ENCODE measurements at regions of chr15 and their contacts with region 1.

Region 1: GRCh38 chr15:88003541-88004332 is 252.8 kb downstream of the NTRK3 start:
- DNase-seq: no peak
- H3K4me3 ChIP-seq: no peak overlapping the region
- H3K27ac ChIP-seq: no peak overlapping the region
- H3K4me1 ChIP-seq: no peaks in the 10 kb centered on the region
- H3K27me3 ChIP-seq: no peaks in the 10 kb centered on the region
- CTCF ChIP-seq: no peak
- EP300 ChIP-seq: no peak
- POLR2A ChIP-seq: no peak

Region 2: GRCh38 chr15:87952736-87953287 is 50.9 kb before region 1 on chr15:
- intact Hi-C with region 1: loop called in 1 of 4 experiments (anchors 2 kb)
- DNase-seq: no peak
- H3K4me3 ChIP-seq: no peak overlapping the region
- H3K27ac ChIP-seq: no peak overlapping the region
- H3K4me1 ChIP-seq: no peaks in the 10 kb centered on the region
- H3K27me3 ChIP-seq: no peaks in the 10 kb centered on the region
- CTCF ChIP-seq: no peak
- EP300 ChIP-seq: no peak
- POLR2A ChIP-seq: no peak

Region 3: GRCh38 chr15:87967953-87968352 is 35.8 kb before region 1 on chr15:
- intact Hi-C with region 1: no loop called
- DNase-seq: no peak
- H3K4me3 ChIP-seq: no peak overlapping the region
- H3K27ac ChIP-seq: no peak overlapping the region
- H3K4me1 ChIP-seq: no peaks in the 10 kb centered on the region
- H3K27me3 ChIP-seq: no peaks in the 10 kb centered on the region
- CTCF ChIP-seq: no peak
- EP300 ChIP-seq: no peak
- POLR2A ChIP-seq: no peak

Region 4: GRCh38 chr15:88491158-88491557 is 487.4 kb after region 1 on chr15:
- intact Hi-C with region 1: no loop called
- DNase-seq: no peak
- H3K4me3 ChIP-seq: no peak overlapping the region
- H3K27ac ChIP-seq: no peak overlapping the region
- H3K4me1 ChIP-seq: no peaks in the 10 kb centered on the region
- H3K27me3 ChIP-seq: no peaks in the 10 kb centered on the region
- CTCF ChIP-seq: no peak
- EP300 ChIP-seq: no peak
- POLR2A ChIP-seq: no peak